ENCODE measurements at regions of chr1 and their contacts with region 1.

Region 1: GRCh38 chr1:3900119-3900968 is at the start of gene C1orf174:
- DNase-seq: peak; percentile 87
- ATAC-seq: peak; percentile 82
- H3K4me3 Mint-ChIP-seq: peak within 1 kb of the TSS; percentile 94
- H3K27ac Mint-ChIP-seq: peak within 1 kb of the TSS; percentile 97
- H3K4me1 Mint-ChIP-seq: peaks cover 25% of the 10 kb centered on the region
- H3K27me3 Mint-ChIP-seq: no peaks in the 10 kb centered on the region
- CTCF ChIP-seq: no peak
- total RNA-seq, gene C1orf174: 26.2 and 27.5 TPM in 2 replicates

Region 2: GRCh38 chr1:2027839-2028583 is 1872.3 kb before region 1 on chr1:
- CTCF ChIA-PET with region 1: no interaction called
- POLR2A ChIA-PET with region 1: interaction called, 10 read pairs
- intact Hi-C with region 1: no loop called
- DNase-seq: no peak
- ATAC-seq: peak; percentile 42
- H3K4me3 Mint-ChIP-seq: peak overlapping the region; percentile 19
- H3K27ac Mint-ChIP-seq: no peak overlapping the region
- H3K4me1 Mint-ChIP-seq: peaks cover 8% of the 10 kb centered on the region
- H3K27me3 Mint-ChIP-seq: peaks cover 13% of the 10 kb centered on the region
- CTCF ChIP-seq: no peak

Region 3: GRCh38 chr1:2525920-2526823 is 1374.2 kb before region 1 on chr1 and contains the start of gene PANK4:
- CTCF ChIA-PET with region 1: no interaction called
- POLR2A ChIA-PET with region 1: no interaction called
- intact Hi-C with region 1: loop called (anchors 2 kb)
- DNase-seq: peak; percentile 90
- ATAC-seq: peak; percentile 93
- H3K4me3 Mint-ChIP-seq: peak within 1 kb of the TSS; percentile 96
- H3K27ac Mint-ChIP-seq: peak within 1 kb of the TSS; percentile 96
- H3K4me1 Mint-ChIP-seq: peaks cover 45% of the 10 kb centered on the region
- H3K27me3 Mint-ChIP-seq: peaks cover 3% of the 10 kb centered on the region
- CTCF ChIP-seq: no peak
- total RNA-seq, gene PANK4: 43.1 and 54.0 TPM in 2 replicates

Region 4: DNA sequence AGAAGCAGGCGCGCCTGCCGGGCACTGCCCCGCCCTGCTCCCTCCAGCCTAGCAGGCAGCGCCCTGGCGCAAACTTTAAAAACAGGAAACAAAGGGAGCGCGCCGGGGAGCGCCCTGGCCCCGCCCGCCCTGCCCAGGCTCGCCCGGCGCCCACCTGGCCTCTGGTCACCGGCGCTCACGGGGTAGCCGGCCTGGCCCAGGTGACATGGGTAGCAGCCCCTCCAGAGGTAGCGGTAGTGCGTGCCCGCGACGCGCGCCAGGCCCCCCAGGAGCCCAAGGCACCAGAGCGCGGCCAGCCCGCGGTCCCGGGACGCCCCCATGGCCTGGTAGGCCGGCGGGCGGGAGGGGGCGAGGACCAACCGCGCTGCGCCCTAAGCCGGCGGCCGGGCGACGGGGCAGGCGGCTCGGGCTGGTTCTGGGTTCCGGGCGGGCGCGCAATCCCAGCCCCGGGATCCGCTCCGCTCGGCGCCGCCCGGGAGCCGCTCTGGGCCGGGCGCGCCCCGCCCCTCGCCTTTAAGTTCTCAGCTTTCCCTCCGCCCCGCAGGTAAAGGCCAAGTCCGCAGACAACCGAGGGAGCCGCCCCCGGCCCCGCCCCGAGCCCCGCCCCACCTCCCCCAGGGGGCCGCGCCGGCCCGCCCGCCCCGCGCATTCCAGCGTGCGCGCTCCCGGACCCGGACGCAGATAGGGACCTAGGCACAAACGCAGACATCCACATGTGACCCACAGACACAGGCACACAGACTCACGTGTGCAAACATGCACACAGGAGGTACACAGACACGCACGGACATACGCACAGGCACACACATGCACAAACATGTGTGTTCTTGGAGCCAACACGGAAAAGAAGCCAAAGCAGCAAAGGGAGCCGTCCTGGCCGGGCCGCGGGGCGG is 369.2 kb before region 1 on chr1:
- CTCF ChIA-PET with region 1: no interaction called
- POLR2A ChIA-PET with region 1: no interaction called
- intact Hi-C with region 1: loop called (anchors 1 kb)
- DNase-seq: peak; percentile 63
- ATAC-seq: peak; percentile 84
- H3K4me3 Mint-ChIP-seq: peak overlapping the region; percentile 76
- H3K27ac Mint-ChIP-seq: peak overlapping the region; percentile 65
- H3K4me1 Mint-ChIP-seq: peaks cover 15% of the 10 kb centered on the region
- H3K27me3 Mint-ChIP-seq: no peaks in the 10 kb centered on the region
- CTCF ChIP-seq: no peak

Region 5: GRCh38 chr1:3796215-3797061 is 103.9 kb before region 1 on chr1 and contains the start of gene LRRC47:
- CTCF ChIA-PET with region 1: no interaction called
- POLR2A ChIA-PET with region 1: interaction called, 4 read pairs
- intact Hi-C with region 1: loop called (anchors 1 kb)
- DNase-seq: peak; percentile 91
- ATAC-seq: peak; percentile 99
- H3K4me3 Mint-ChIP-seq: peak within 1 kb of the TSS; percentile 95
- H3K27ac Mint-ChIP-seq: peak within 1 kb of the TSS; percentile 92
- H3K4me1 Mint-ChIP-seq: peaks cover 48% of the 10 kb centered on the region
- H3K27me3 Mint-ChIP-seq: peaks cover 5% of the 10 kb centered on the region
- CTCF ChIP-seq: no peak
- total RNA-seq, gene LRRC47: 40.3 and 43.3 TPM in 2 replicates

Region 6: GRCh38 chr1:3869751-3870301 is 30.5 kb before region 1 on chr1:
- CTCF ChIA-PET with region 1: no interaction called
- POLR2A ChIA-PET with region 1: no interaction called
- intact Hi-C with region 1: no loop called
- DNase-seq: no peak
- ATAC-seq: no peak
- H3K4me3 Mint-ChIP-seq: no peak overlapping the region
- H3K27ac Mint-ChIP-seq: no peak overlapping the region
- H3K4me1 Mint-ChIP-seq: no peaks in the 10 kb centered on the region
- H3K27me3 Mint-ChIP-seq: no peaks in the 10 kb centered on the region
- CTCF ChIP-seq: no peak

Region 7: GRCh38 chr1:4027492-4028138 is 127.3 kb after region 1 on chr1:
- CTCF ChIA-PET with region 1: no interaction called
- POLR2A ChIA-PET with region 1: interaction called, 5 read pairs
- intact Hi-C with region 1: loop called (anchors 1 kb)
- DNase-seq: peak; percentile 65
- ATAC-seq: peak; percentile 94
- H3K4me3 Mint-ChIP-seq: peak overlapping the region; percentile 69
- H3K27ac Mint-ChIP-seq: peak overlapping the region; percentile 75
- H3K4me1 Mint-ChIP-seq: peaks cover 63% of the 10 kb centered on the region
- H3K27me3 Mint-ChIP-seq: no peaks in the 10 kb centered on the region
- CTCF ChIP-seq: no peak